ENCODE measurements at regions of chr1 and their contacts with region 1.

Region 1: GRCh38 chr1:235642011-235642942 is 7.3 kb downstream of the GNG4 start:
- DNase-seq: peak; percentile 74 to 86
- ATAC-seq: peak; percentile 82 to 89 (median 84)
- H3K4me3 ChIP-seq: peak overlapping the region; percentile 35
- H3K4me3 Mint-ChIP-seq: peak overlapping the region; percentile 93
- H3K27ac ChIP-seq: peak overlapping the region; percentile 75
- H3K27ac Mint-ChIP-seq: peak overlapping the region; percentile 89 to 95
- H3K4me1 ChIP-seq: peaks cover 30% of the 10 kb centered on the region
- H3K4me1 Mint-ChIP-seq: peaks cover 21 to 22% of the 10 kb centered on the region in 2 donors
- H3K27me3 ChIP-seq: no peaks in the 10 kb centered on the region
- H3K27me3 Mint-ChIP-seq: peaks cover 15 to 27% of the 10 kb centered on the region in 2 donors
- CTCF ChIP-seq: no peak

Region 2: DNA sequence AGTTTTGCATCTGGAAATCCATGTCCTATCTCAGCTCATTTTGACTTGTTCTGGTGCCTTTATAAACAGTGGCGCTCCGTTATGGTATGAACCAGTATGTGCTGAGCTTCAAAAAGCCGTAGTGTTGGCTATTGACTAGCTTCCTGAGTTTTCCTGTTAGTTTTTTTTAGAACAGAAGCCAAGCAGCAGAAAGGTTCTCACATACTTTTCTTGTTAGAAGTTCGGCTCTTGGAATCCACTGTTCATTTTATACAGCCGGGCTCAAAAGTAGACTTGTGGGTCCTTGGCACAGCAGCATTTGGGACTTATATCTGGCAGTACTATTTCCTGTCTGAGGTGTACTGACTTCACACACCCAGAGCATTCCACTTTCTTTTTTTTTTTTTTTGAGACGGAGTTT is 211.3 kb before region 1 on chr1:
- intact Hi-C with region 1: no loop called
- DNase-seq: no peak
- ATAC-seq: no peak
- H3K4me3 ChIP-seq: no peak overlapping the region
- H3K4me3 Mint-ChIP-seq: no peak overlapping the region
- H3K27ac ChIP-seq: no peak overlapping the region
- H3K27ac Mint-ChIP-seq: no peak overlapping the region
- H3K4me1 ChIP-seq: no peaks in the 10 kb centered on the region
- H3K4me1 Mint-ChIP-seq: peaks cover 0 to 3% of the 10 kb centered on the region in 2 donors
- H3K27me3 ChIP-seq: no peaks in the 10 kb centered on the region
- H3K27me3 Mint-ChIP-seq: no peaks in the 10 kb centered on the region
- CTCF ChIP-seq: no peak

Region 3: GRCh38 chr1:235504496-235505222 is 137.6 kb before region 1 on chr1:
- intact Hi-C with region 1: loop called (anchors 1 kb)
- DNase-seq: peak; percentile 95 to 99
- ATAC-seq: peak; percentile 85 to 97 (median 90)
- H3K4me3 ChIP-seq: peak overlapping the region; percentile 98
- H3K4me3 Mint-ChIP-seq: peak overlapping the region; percentile 98
- H3K27ac ChIP-seq: peak overlapping the region; percentile 96
- H3K27ac Mint-ChIP-seq: peak overlapping the region; percentile 96 to 98
- H3K4me1 ChIP-seq: peaks cover 11% of the 10 kb centered on the region
- H3K4me1 Mint-ChIP-seq: peaks cover 21 to 26% of the 10 kb centered on the region in 2 donors
- H3K27me3 ChIP-seq: no peaks in the 10 kb centered on the region
- H3K27me3 Mint-ChIP-seq: peaks cover 0 to 5% of the 10 kb centered on the region in 2 donors
- CTCF ChIP-seq: peak; percentile 73

Region 4: DNA sequence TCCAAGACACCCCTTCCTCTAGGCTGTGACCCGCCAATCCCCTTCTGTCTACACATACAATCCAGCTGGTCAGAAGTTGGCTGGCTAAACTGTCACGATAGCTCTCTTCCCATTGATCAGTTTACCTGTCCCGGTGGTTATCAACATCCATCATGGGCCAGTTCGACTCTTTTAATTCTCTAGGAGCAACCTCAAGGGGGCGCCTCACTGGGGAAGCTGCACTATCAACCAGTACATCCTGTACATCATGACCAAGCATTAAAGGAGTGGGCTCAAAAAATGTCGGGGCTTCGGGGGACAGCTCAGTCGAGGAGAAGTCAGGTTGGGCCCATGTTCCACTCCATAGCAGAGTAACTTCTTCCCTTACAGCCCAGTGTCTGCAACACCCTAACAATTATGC is 84.8 kb before region 1 on chr1:
- intact Hi-C with region 1: no loop called
- DNase-seq: peak in 1 of 2 donors; percentile 15
- ATAC-seq: no peak
- H3K4me3 ChIP-seq: no peak overlapping the region
- H3K4me3 Mint-ChIP-seq: no peak overlapping the region
- H3K27ac ChIP-seq: no peak overlapping the region
- H3K27ac Mint-ChIP-seq: no peak overlapping the region
- H3K4me1 ChIP-seq: no peaks in the 10 kb centered on the region
- H3K4me1 Mint-ChIP-seq: no peaks in the 10 kb centered on the region
- H3K27me3 ChIP-seq: no peaks in the 10 kb centered on the region
- H3K27me3 Mint-ChIP-seq: no peaks in the 10 kb centered on the region
- CTCF ChIP-seq: no peak

Region 5: DNA sequence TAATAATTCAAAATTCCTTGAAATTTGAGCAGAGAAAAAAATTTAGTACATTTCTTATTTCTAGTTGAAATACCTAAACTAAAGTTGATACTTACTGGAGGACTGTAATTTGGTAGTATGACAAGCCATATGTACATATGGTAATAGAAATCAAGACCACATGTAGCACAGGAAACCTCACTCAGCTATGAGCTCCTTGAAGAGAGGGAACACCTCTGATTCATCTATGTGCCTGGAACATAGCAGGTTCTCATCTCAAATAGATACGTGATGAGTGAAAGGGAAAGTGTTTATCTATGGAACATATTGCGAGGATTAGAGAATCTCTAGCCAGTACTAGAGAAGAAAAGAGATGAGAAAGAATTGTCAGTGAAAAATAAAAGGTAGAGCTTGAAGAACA is 55.2 kb after region 1 on chr1:
- intact Hi-C with region 1: loop called (anchors 1 kb)
- DNase-seq: peak in 1 of 2 donors; percentile 41
- ATAC-seq: peak; percentile 92 to 99 (median 98)
- H3K4me3 ChIP-seq: no peak overlapping the region
- H3K4me3 Mint-ChIP-seq: peak overlapping the region; percentile 3
- H3K27ac ChIP-seq: no peak overlapping the region
- H3K27ac Mint-ChIP-seq: peak overlapping the region; percentile 34 to 72
- H3K4me1 ChIP-seq: no peaks in the 10 kb centered on the region
- H3K4me1 Mint-ChIP-seq: peaks cover 8 to 9% of the 10 kb centered on the region in 2 donors
- H3K27me3 ChIP-seq: no peaks in the 10 kb centered on the region
- H3K27me3 Mint-ChIP-seq: no peaks in the 10 kb centered on the region
- CTCF ChIP-seq: no peak